ENCODE measurements at regions of chr19 and their contacts with region 1.

Region 1: DNA sequence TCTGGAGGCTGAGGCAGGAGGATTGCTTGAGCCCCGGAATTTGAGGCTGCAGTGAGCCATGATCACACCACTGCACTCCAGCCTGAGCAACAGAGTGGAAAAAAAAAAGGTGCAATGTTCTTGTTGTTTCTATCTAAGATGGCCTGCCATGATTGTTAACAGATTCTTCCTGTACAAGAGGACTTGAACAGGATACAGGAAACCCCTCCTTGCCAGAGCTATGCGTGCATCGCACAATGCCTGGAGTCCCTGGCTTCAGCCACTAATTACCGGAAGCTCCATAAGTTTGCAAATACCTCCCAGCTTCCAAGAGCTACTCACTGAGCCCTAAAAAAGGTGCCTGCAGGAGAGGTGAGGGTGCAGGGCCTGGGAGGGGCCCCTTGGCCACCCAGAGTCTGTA is 13.1 kb upstream of the HIF3A start:
- DNase-seq: no peak

Region 2: DNA sequence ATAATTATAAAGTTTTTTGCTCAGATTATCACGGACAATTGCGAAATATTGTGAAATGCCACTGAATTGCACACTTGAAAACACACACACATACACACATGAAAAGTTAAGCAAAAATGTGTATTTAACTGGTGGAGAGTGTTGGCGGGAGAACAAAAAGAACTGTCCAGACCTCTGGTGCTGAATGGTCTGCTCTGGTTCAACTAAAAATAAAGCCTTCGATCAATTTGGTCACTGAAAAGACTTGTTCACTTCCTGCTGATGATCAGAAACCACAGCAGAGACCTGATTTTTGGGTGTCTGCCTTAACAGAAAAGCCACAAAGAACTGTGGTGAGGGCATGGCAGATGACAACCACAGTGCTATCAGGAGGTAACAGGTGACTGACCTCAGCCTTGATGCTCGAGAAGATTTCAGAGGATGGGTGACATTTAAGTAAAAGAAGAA is 58.2 kb before region 1 on chr19:
- intact Hi-C with region 1: no loop called
- DNase-seq: no peak

Region 3: DNA sequence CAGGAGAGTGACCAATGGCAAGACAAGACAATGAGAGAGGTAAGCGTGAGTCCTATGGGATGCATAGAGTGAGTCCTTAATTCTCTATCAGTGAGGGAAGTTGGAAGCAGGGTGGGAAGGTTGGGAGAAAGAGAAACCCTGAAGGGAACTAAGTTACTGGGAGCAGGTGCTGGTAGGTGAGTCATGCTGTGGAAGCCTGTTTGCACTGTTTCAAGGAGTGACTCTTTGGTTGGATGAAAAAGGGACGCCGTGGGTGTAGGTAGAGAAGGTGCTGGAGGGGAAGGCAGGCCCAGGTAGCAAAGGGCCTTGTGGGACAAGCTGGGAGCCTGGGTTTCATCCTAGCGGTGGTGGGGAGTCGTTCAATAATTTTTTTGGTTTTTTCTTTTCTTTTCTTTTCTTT is 32.4 kb before region 1 on chr19:
- intact Hi-C with region 1: no loop called
- DNase-seq: no peak

Region 4: DNA sequence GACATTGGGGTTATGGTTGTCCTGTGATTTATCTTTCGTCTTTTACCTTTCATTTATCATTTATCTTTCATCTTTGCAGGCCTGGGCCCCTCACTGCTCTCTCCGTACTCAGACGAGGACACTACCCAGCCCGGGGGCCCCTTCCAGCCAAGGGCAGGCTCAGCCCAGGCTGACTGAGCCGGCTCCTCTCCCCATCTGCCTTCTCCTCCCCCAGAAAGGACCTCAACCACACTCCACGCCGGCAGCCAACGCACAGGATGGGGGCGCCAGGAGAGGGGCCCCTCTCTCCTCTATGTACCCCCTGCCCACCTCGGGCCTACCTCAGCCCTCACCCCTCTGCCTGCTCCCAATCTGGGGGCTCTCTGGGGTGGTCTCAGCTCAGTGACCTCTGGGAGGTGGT is 55.7 kb after region 1 on chr19:
- intact Hi-C with region 1: loop called in 1 of 2 experiments (anchors 5 kb)
- DNase-seq: peak; percentile 44

Region 5: DNA sequence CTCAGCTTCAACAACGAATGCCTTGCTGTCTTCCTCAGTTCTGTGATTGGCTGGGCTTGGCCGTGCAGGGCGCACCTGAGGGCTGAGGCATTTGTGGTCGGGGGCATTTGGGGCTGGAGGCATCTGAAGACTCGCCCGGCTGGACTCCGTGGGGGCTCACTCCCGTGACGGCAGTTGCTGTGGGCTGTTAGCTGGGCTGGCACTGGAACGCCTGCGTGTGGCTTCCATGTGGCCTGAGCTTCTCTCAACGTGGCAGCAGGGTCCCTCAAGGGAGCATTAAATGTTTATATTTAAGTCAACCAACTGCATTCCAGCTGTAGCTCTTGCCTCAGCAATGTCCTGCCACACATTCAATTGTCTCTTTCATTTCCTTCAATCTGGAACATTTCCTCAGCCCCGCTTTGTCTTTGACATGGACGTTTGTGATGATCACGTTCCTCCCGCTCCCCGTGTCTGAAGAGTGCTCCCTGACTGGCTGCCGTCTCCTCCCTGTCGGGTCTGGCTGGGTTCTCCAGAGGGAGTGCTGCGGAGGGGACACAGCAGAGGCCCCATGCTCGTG is 108.6 kb after region 1 on chr19:
- intact Hi-C with region 1: loop called in 1 of 2 experiments (anchors 5 kb)
- DNase-seq: peak; percentile 80